A673 (cell line): ENCODE measurements at regions of chr5 and their contacts with region 1.

Region 1: DNA sequence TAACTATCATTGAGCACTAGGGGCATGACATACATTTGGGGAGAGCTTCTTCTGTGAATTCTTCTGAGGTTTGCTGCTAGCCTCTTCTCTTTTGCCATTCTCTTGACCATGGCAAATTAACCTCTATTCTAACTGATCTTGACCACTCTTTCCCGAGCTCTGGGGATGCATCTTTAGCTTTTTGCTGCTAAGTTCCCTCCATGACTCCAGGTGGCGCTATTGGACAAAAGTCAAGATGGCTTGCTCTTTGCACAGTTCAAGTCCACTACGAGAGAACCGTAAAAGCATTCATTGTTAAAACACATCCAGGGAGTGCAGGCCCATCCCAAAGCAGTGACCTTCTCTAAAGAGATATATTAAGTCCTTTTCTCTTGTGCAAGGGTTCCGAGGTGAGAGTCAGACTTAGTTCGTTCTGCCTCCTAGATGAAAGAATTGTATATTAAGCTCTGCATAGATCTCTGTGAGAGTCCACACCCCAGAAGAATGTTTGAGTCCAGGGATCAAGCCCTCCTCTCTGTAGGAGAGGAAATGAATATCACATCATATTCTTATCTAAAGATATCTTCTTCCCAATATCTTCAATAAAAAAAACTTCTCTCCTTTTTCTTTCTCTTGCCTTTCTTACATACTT is 1152.9 kb upstream of the CDH6 start:
- DNase-seq: peak; percentile 90
- H3K4me3 ChIP-seq: no peak overlapping the region
- H3K27ac ChIP-seq: peak overlapping the region; percentile 85
- H3K4me1 ChIP-seq: peaks cover 38% of the 10 kb centered on the region
- H3K27me3 ChIP-seq: no peaks in the 10 kb centered on the region
- CTCF ChIP-seq: peak; percentile 86

Region 2: GRCh38 chr5:29367176-29367833 is 673.3 kb before region 1 on chr5:
- CTCF ChIA-PET with region 1: no interaction called
- POLR2A ChIA-PET with region 1: no interaction called
- intact Hi-C with region 1: loop called (anchors 5 kb)
- DNase-seq: peak; percentile 31
- H3K4me3 ChIP-seq: no peak overlapping the region
- H3K27ac ChIP-seq: no peak overlapping the region
- H3K4me1 ChIP-seq: no peaks in the 10 kb centered on the region
- H3K27me3 ChIP-seq: no peaks in the 10 kb centered on the region
- CTCF ChIP-seq: peak; percentile 53

Region 3: GRCh38 chr5:29939988-29940387 is 100.6 kb before region 1 on chr5:
- CTCF ChIA-PET with region 1: no interaction called
- POLR2A ChIA-PET with region 1: no interaction called
- intact Hi-C with region 1: loop called (anchors 2 kb)
- DNase-seq: peak; percentile 60
- H3K4me3 ChIP-seq: no peak overlapping the region
- H3K27ac ChIP-seq: no peak overlapping the region
- H3K4me1 ChIP-seq: peaks cover 21% of the 10 kb centered on the region
- H3K27me3 ChIP-seq: no peaks in the 10 kb centered on the region
- CTCF ChIP-seq: no peak

Region 4: DNA sequence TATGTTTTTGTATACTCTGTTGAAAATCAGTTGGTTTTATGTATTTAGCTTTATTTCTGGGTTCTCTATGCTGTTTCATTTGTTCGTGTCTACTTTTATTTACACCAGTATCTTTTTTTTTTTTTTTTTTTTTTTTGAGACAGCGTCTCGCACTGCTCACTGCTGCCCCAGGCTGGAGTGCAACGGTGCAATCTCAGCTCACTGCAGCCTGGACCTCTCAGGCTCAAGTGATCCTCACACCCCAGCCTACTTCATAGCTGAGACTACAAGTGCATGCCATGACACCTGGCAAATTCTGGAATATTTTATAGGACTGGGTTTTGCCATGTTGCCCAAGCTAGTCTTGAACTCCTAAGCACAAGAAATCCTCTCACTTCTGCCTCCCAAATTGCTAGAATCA is 283.5 kb after region 1 on chr5:
- CTCF ChIA-PET with region 1: interaction called, 5 read pairs
- POLR2A ChIA-PET with region 1: no interaction called
- intact Hi-C with region 1: loop called (anchors 1 kb)
- DNase-seq: no peak
- H3K4me3 ChIP-seq: no peak overlapping the region
- H3K27ac ChIP-seq: no peak overlapping the region
- H3K4me1 ChIP-seq: peaks cover 11% of the 10 kb centered on the region
- H3K27me3 ChIP-seq: no peaks in the 10 kb centered on the region
- CTCF ChIP-seq: peak; percentile 26; the same call in 1 of the 2 replicates

Region 5: DNA sequence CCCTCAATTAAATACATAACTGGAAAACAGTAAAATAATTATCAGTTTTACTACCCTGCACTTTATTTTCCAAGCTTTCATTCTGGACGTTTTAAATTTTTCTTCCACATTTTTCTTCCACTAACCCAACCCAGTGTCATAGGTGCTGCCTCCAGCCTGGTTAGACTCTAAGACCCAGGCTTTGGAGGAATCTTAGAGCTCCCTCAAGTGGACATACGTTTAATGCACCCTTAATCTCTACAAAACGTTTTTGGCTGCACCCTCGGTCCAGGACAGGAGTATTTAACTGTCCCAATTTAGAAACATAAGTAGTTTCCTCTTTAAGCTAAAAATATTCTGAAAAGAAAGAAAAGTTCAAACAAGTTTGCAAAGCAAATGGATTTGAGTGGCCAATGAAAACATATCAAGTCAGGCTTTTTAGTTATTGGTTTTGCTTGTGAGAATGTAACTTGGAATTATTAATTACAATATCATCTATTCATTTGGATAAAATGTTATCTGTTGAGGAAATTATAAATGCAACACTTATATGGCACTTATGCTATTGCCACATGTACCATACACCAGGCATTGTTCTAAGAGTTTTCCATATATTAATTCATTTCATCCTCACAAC is 1191.8 kb after region 1 on chr5:
- CTCF ChIA-PET with region 1: interaction called, 8 read pairs
- POLR2A ChIA-PET with region 1: no interaction called
- intact Hi-C with region 1: loop called (anchors 2 kb)
- DNase-seq: peak; percentile 84
- H3K4me3 ChIP-seq: no peak overlapping the region
- H3K27ac ChIP-seq: no peak overlapping the region
- H3K4me1 ChIP-seq: peaks cover 44% of the 10 kb centered on the region
- H3K27me3 ChIP-seq: no peaks in the 10 kb centered on the region
- CTCF ChIP-seq: peak; percentile 88

Region 6: GRCh38 chr5:31487506-31487905 is 1446.9 kb after region 1 on chr5:
- CTCF ChIA-PET with region 1: no interaction called
- POLR2A ChIA-PET with region 1: no interaction called
- intact Hi-C with region 1: loop called (anchors 10 kb)
- DNase-seq: no peak
- H3K4me3 ChIP-seq: no peak overlapping the region
- H3K27ac ChIP-seq: no peak overlapping the region
- H3K4me1 ChIP-seq: peaks cover 20% of the 10 kb centered on the region
- H3K27me3 ChIP-seq: no peaks in the 10 kb centered on the region
- CTCF ChIP-seq: peak; percentile 41; the same call in 1 of the 2 replicates